ENCODE measurements at regions of chr18 and their contacts with region 1.

Region 1: DNA sequence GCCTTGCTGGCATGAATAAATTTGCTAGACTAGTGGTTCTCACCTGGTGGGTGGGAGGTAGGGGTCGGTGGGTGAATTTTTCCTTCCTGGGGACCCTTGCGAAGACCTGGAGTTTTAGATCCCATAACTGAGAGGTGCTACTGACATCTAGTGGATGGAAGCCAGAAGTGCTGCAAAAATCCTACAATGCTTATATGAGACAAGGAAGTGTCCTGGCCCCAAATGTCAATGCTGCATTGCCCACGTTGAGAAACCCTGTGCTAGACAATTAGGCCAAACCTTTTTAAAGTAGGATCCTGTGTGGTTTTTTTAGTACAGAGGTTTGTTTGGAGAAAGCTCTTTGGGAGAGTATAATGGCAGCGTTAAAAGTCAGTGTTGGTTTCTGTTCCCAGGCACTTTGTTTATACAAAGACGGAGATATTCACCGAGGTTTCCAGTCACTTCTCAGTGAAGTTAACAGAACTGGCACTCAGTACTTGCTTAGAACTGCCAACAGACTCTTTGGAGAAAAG is 9.6 kb downstream of the SERPINB8 start:
- DNase-seq: peak; percentile 42
- H3K4me3 Mint-ChIP-seq: peak overlapping the region; percentile 54
- H3K27ac Mint-ChIP-seq: no peak overlapping the region
- H3K4me1 Mint-ChIP-seq: peaks cover 32% of the 10 kb centered on the region
- H3K27me3 Mint-ChIP-seq: no peaks in the 10 kb centered on the region

Region 2: DNA sequence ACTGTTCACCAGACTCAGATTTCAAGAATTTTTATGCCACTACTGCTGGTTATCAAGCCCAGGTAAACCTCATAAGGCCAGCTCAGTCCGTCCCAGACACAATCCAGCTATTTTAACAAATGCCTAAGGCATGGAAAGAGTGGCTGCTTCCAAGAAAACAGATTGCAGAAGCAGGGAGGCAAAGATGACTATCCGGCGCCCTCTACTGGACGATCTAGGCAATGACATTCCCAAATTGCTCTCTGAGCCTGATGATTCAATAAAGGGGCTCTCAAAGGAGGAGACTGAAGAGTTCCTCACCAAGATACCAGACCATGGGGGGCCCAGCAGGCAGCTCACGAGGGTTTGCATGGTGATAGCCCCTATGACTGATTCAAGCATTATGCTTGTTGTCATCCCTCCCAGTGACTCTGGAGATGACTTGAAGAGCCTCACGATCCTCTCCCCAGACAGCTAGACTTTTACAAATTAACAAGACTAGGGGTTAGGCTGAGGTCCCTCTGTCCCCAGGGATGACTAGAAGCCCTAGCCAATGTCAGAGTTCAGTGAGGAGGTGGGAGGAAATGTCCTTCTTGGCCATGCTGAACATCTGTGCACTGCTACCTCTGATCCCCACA is 15.4 kb after region 1 on chr18:
- CTCF ChIA-PET with region 1: interaction called, 14 read pairs
- POLR2A ChIA-PET with region 1: no interaction called
- DNase-seq: peak; percentile 46
- H3K4me3 Mint-ChIP-seq: no peak overlapping the region
- H3K27ac Mint-ChIP-seq: no peak overlapping the region
- H3K4me1 Mint-ChIP-seq: peaks cover 8% of the 10 kb centered on the region
- H3K27me3 Mint-ChIP-seq: no peaks in the 10 kb centered on the region

Region 3: GRCh38 chr18:64149916-64150438 is 170.5 kb after region 1 on chr18:
- CTCF ChIA-PET with region 1: no interaction called
- POLR2A ChIA-PET with region 1: no interaction called
- DNase-seq: no peak
- H3K4me3 Mint-ChIP-seq: no peak overlapping the region
- H3K27ac Mint-ChIP-seq: no peak overlapping the region
- H3K4me1 Mint-ChIP-seq: no peaks in the 10 kb centered on the region
- H3K27me3 Mint-ChIP-seq: no peaks in the 10 kb centered on the region

Measured in activated CD4-positive, alpha-beta memory T cell treated with anti-CD3 and anti-CD28 coated beads, Interleukin-2, amount 10 ng/mL, durations not matched to agents 7 days and 5 days (primary cell).